MCF 10A (cell line): ENCODE measurements at regions of chr16 and their contacts with region 1.

Region 1: DNA sequence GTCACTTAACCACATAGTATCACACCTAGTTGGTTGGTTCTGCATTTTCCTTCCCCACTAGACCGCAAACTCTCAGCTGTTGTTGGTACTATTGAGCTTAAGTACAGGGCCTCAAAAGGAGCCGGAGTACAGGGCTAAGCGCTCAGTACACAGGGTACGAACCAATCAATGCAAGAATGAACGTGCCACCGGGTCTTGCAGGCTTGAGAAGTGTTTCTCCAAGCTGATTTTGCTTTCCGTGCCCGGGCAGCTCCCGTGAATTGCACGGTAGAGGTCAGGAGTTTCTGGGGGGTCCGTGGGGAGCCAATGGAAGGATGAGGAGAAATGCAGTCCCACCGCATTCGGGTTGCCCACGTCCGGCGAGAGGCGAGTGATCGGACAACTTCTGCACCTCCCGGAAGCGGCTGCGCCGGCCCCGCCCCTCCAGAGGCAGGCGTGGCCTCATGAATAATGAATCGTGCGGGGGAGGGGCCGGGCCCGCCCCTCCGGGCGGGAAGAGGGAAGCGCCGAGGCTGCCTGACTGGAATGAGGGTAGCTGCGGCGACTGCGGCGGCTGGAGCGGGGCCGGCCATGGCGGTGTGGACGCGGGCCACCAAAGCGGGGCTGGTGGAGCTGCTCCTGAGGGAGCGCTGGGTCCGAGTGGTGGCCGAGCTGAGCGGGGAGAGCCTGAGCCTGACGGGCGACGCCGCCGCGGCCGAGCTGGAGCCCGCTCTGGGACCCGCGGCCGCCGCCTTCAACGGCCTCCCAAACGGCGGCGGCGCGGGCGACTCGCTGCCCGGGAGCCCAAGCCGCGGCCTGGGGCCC is at the start of gene SNTB2:
- DNase-seq: peak; percentile 93
- H3K4me3 Mint-ChIP-seq: peak within 1 kb of the TSS; percentile 79
- H3K27ac Mint-ChIP-seq: peak within 1 kb of the TSS; percentile 17
- H3K4me1 Mint-ChIP-seq: peaks cover 29% of the 10 kb centered on the region
- H3K27me3 Mint-ChIP-seq: no peaks in the 10 kb centered on the region
- CTCF ChIP-seq: no peak
- total RNA-seq, gene SNTB2: 20.2 and 20.6 TPM in 2 replicates

Region 2: GRCh38 chr16:69132424-69133252 is 54.2 kb before region 1 on chr16 and contains the starts of genes CHTF8 and UTP4:
- CTCF ChIA-PET with region 1: interaction called, 3 read pairs
- POLR2A ChIA-PET with region 1: interaction called, 24 read pairs
- intact Hi-C with region 1: no loop called
- DNase-seq: peak; percentile 76
- H3K4me3 Mint-ChIP-seq: peak within 1 kb of the TSS; percentile 87
- H3K27ac Mint-ChIP-seq: peak within 1 kb of the TSS; percentile 87
- H3K4me1 Mint-ChIP-seq: peaks cover 20% of the 10 kb centered on the region
- H3K27me3 Mint-ChIP-seq: no peaks in the 10 kb centered on the region
- CTCF ChIP-seq: no peak
- total RNA-seq, gene CHTF8: 107 and 113 TPM in 2 replicates
- total RNA-seq, gene UTP4: 77.1 and 97.1 TPM in 2 replicates

Region 3: GRCh38 chr16:69150146-69150865 is 36.5 kb before region 1 on chr16:
- CTCF ChIA-PET with region 1: interaction called, 4 read pairs
- POLR2A ChIA-PET with region 1: interaction called, 5 read pairs
- intact Hi-C with region 1: loop called (anchors 1 kb)
- DNase-seq: peak; percentile 82
- H3K4me3 Mint-ChIP-seq: no peak overlapping the region
- H3K27ac Mint-ChIP-seq: no peak overlapping the region
- H3K4me1 Mint-ChIP-seq: no peaks in the 10 kb centered on the region
- H3K27me3 Mint-ChIP-seq: no peaks in the 10 kb centered on the region
- CTCF ChIP-seq: peak; percentile 77

Region 4: GRCh38 chr16:69204172-69204571 is 17.3 kb after region 1 on chr16:
- CTCF ChIA-PET with region 1: interaction called, 7 read pairs
- POLR2A ChIA-PET with region 1: interaction called, 87 read pairs
- intact Hi-C with region 1: loop called (anchors 1 kb)
- DNase-seq: no peak
- H3K4me3 Mint-ChIP-seq: no peak overlapping the region
- H3K27ac Mint-ChIP-seq: peak overlapping the region; percentile 89
- H3K4me1 Mint-ChIP-seq: peaks cover 35% of the 10 kb centered on the region
- H3K27me3 Mint-ChIP-seq: no peaks in the 10 kb centered on the region
- CTCF ChIP-seq: no peak

Region 5: DNA sequence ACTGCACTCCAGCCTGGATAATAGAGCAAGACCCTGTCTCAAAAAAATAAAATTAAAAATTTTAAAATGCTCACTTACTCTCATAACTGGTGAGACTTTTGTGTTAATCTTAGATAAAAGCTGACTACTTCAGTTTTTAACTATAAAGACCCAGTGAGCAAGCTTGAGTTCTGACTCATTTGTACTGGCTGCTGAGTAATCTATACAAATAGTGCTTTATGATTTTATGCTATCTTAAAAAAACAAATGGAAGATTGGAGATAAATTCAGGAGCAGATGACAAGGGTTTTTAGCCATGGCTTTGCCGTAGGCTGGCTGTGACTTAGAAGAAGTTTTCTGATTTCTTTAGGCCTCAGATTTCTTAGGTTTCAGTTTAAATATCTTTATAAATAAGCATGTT is 30.6 kb after region 1 on chr16:
- CTCF ChIA-PET with region 1: interaction called, 3 read pairs
- POLR2A ChIA-PET with region 1: interaction called, 31 read pairs
- intact Hi-C with region 1: no loop called
- DNase-seq: peak; percentile 30
- H3K4me3 Mint-ChIP-seq: peak overlapping the region; percentile 33
- H3K27ac Mint-ChIP-seq: peak overlapping the region; percentile 12
- H3K4me1 Mint-ChIP-seq: peaks cover 17% of the 10 kb centered on the region
- H3K27me3 Mint-ChIP-seq: no peaks in the 10 kb centered on the region
- CTCF ChIP-seq: no peak

Region 6: GRCh38 chr16:69286941-69287713 is 100.3 kb after region 1 on chr16:
- CTCF ChIA-PET with region 1: interaction called, 16 read pairs
- POLR2A ChIA-PET with region 1: interaction called, 14 read pairs
- intact Hi-C with region 1: loop called (anchors 1 kb)
- DNase-seq: peak; percentile 77
- H3K4me3 Mint-ChIP-seq: no peak overlapping the region
- H3K27ac Mint-ChIP-seq: no peak overlapping the region
- H3K4me1 Mint-ChIP-seq: no peaks in the 10 kb centered on the region
- H3K27me3 Mint-ChIP-seq: no peaks in the 10 kb centered on the region
- CTCF ChIP-seq: peak; percentile 53